Activated naive CD4-positive, alpha-beta T cell treated with anti-CD3 and anti-CD28 coated beads for 36 hours (primary cell): ENCODE measurements at regions of chr1 and their contacts with region 1.

Region 1: DNA sequence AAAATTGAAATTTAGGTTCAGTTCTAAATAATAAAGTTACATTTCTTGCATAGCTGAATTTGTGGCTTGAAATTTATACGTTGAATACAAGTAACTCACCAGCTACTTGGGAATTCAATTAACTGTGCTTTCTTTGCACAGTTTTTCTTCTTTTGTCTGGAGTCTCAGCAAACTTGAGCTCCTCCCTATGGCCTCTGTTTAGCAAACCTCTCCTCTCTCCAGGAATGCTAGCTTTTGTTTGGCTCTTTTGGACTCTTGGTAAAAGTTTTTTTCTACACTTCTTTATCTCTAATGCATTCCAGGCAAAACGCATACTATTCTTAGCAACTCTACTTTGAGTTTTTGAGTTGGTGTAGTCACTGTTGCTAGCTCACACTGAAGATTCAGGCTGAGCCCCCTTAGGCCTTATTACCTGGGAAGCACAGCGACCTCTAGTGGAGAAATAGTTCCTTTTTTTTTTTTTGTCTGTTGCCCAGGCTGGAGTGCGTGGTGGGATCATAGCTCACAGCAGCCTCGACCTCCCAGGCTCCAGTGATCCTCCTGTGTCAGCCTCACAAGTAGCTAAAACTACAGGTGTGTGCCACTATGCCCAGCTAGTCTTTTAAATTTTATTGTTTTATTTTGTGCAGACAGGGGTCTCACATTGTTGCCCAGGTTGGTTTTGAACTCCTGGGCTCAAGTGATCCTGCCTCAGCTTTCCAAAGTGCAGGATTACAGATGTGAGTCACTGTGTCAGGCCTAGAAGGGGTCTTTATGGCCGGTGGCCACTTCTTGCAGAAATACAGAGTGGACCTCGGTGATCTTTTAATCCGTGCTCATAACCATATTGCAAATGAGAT is 61.7 kb downstream of the CASQ2 start:
- DNase-seq: no peak
- H3K4me3 Mint-ChIP-seq: no peak overlapping the region
- H3K27ac Mint-ChIP-seq: no peak overlapping the region
- H3K4me1 Mint-ChIP-seq: no peaks in the 10 kb centered on the region
- H3K27me3 Mint-ChIP-seq: peaks cover 15% of the 10 kb centered on the region

Region 2: GRCh38 chr1:115138968-115139367 is 567.8 kb before region 1 on chr1:
- CTCF ChIA-PET with region 1: interaction called, 12 read pairs
- intact Hi-C with region 1: loop called (anchors 5 kb)
- DNase-seq: peak; percentile 72
- H3K4me3 Mint-ChIP-seq: peak overlapping the region; percentile 3
- H3K27ac Mint-ChIP-seq: no peak overlapping the region
- H3K4me1 Mint-ChIP-seq: peaks cover 3% of the 10 kb centered on the region
- H3K27me3 Mint-ChIP-seq: peaks cover 21% of the 10 kb centered on the region

Region 3: DNA sequence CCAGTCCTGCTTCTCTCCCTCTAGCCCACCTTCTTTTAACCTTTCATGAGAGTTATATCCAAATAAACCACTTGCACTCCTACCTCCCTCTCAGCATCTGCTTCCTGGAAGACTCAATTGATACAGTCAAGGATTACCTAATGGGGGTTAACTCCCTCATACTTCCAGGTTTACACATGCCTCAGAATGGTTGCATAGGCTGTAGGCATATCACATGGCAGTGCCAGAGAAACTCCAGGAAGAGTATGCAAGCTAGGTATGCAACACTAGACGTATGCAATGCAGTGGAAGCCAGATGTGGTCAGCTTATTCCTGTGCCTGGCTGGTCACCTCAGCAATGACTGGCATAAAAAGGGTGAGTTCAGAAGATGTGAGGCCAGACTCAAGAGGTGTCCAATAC is 97.8 kb before region 1 on chr1:
- CTCF ChIA-PET with region 1: interaction called, 17 read pairs
- intact Hi-C with region 1: loop called (anchors 1 kb)
- DNase-seq: no peak
- H3K4me3 Mint-ChIP-seq: no peak overlapping the region
- H3K27ac Mint-ChIP-seq: no peak overlapping the region
- H3K4me1 Mint-ChIP-seq: no peaks in the 10 kb centered on the region
- H3K27me3 Mint-ChIP-seq: peaks cover 12% of the 10 kb centered on the region

Region 4: GRCh38 chr1:115642168-115643072 is 64.4 kb before region 1 on chr1:
- CTCF ChIA-PET with region 1: interaction called, 3 read pairs
- intact Hi-C with region 1: loop called (anchors 5 kb)
- DNase-seq: peak; percentile 43
- H3K4me3 Mint-ChIP-seq: peak overlapping the region; percentile 70
- H3K27ac Mint-ChIP-seq: no peak overlapping the region
- H3K4me1 Mint-ChIP-seq: peaks cover 7% of the 10 kb centered on the region
- H3K27me3 Mint-ChIP-seq: peaks cover 43% of the 10 kb centered on the region

Region 5: GRCh38 chr1:115771847-115772457 is 65.1 kb after region 1 on chr1:
- CTCF ChIA-PET with region 1: interaction called, 10 read pairs
- intact Hi-C with region 1: loop called (anchors 5 kb)
- DNase-seq: peak; percentile 12
- H3K4me3 Mint-ChIP-seq: no peak overlapping the region
- H3K27ac Mint-ChIP-seq: no peak overlapping the region
- H3K4me1 Mint-ChIP-seq: no peaks in the 10 kb centered on the region
- H3K27me3 Mint-ChIP-seq: peaks cover 9% of the 10 kb centered on the region

Region 6: DNA sequence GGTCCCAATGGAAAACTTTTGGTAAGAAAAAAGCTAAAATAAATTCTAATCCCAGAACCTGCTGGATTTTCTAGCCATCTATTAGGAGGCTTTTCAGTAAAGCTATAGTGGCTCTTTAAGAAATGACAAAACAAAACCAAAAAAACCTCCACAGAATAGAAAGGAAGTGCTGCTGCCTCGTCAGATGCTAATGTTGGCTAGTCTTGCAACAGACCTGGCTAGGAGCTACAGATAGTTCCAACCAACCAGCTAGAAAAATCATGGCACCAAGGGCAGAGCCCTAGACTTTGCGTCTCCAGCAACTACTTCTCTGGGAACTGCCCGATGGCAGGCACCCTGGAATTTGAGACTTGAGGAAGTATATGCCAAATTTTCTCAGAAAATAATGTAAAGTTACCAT is 1302.3 kb after region 1 on chr1:
- CTCF ChIA-PET with region 1: no interaction called
- intact Hi-C with region 1: no loop called
- DNase-seq: peak; percentile 48
- H3K4me3 Mint-ChIP-seq: peak overlapping the region; percentile 30
- H3K27ac Mint-ChIP-seq: peak overlapping the region; percentile 72
- H3K4me1 Mint-ChIP-seq: peaks cover 60% of the 10 kb centered on the region
- H3K27me3 Mint-ChIP-seq: no peaks in the 10 kb centered on the region